ENCODE measurements at regions of chr7 and their contacts with region 1.

Region 1: GRCh38 chr7:2353113-2353935 is 1.3 kb upstream of the EIF3B start:
- DNase-seq: no peak
- ATAC-seq: no peak
- H3K4me3 Mint-ChIP-seq: peak overlapping the region; percentile 86
- H3K27ac Mint-ChIP-seq: peak overlapping the region; percentile 98
- H3K4me1 Mint-ChIP-seq: peaks cover 30% of the 10 kb centered on the region
- H3K27me3 Mint-ChIP-seq: no peaks in the 10 kb centered on the region

Region 2: GRCh38 chr7:2336626-2337299 is 16.6 kb before region 1 on chr7:
- CTCF ChIA-PET with region 1: interaction called, 12 read pairs
- DNase-seq: no peak
- ATAC-seq: no peak
- H3K4me3 Mint-ChIP-seq: no peak overlapping the region
- H3K27ac Mint-ChIP-seq: no peak overlapping the region
- H3K4me1 Mint-ChIP-seq: no peaks in the 10 kb centered on the region
- H3K27me3 Mint-ChIP-seq: no peaks in the 10 kb centered on the region

Region 3: GRCh38 chr7:2529161-2530070 is 176.1 kb after region 1 on chr7:
- CTCF ChIA-PET with region 1: no interaction called
- DNase-seq: peak; percentile 80
- ATAC-seq: peak; percentile 54
- H3K4me3 Mint-ChIP-seq: peak overlapping the region; percentile 67
- H3K27ac Mint-ChIP-seq: peak overlapping the region; percentile 95
- H3K4me1 Mint-ChIP-seq: peaks cover 58% of the 10 kb centered on the region
- H3K27me3 Mint-ChIP-seq: no peaks in the 10 kb centered on the region